ENCODE measurements at regions of chr5 and their contacts with region 1.

Region 1: DNA sequence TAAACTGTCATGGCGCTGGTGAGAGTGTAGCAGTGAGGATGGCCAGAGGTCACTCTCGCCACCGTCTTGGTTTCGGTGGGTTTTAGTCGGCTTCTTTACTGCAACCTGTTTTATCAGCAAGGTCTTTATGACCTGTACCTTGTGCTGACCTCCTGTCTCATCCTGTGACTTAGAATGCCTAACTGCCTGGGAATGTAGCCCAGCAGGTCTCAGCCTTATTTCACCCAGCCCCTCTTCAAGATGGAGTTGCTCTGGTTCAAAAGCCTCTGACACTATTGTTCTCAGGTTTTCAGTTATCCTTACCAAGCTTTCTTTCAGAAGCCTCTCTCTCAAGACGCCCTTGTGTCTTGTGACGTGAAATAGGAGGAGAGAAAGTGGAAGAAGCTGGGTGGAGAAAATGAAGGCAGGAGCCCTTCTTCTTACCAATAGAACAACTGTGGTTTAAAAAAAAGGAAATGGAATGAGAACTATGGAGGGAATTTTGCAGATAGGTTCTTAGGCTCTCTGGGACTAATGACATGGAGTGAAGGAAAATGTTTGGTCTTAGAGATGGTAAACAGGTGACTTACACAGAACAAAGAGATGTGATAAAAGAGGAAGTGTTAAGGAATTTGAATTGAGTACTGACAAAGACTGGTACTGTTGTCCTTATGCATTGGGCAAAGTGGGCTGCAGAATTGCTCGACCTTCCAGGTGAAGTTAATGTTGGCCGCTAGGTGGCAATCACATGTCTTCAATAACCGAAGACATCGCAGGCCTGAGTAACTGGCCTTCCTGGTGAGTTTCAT is 133.3 kb upstream of the RAI14 start:
- DNase-seq: peak; percentile 65
- H3K4me3 Mint-ChIP-seq: no peak overlapping the region
- H3K27ac Mint-ChIP-seq: no peak overlapping the region
- H3K4me1 Mint-ChIP-seq: no peaks in the 10 kb centered on the region
- H3K27me3 Mint-ChIP-seq: no peaks in the 10 kb centered on the region

Region 2: GRCh38 chr5:34533582-34534522 is 11.1 kb after region 1 on chr5:
- CTCF ChIA-PET with region 1: interaction called, 14 read pairs
- DNase-seq: no peak
- H3K4me3 Mint-ChIP-seq: no peak overlapping the region
- H3K27ac Mint-ChIP-seq: no peak overlapping the region
- H3K4me1 Mint-ChIP-seq: no peaks in the 10 kb centered on the region
- H3K27me3 Mint-ChIP-seq: no peaks in the 10 kb centered on the region

Region 3: DNA sequence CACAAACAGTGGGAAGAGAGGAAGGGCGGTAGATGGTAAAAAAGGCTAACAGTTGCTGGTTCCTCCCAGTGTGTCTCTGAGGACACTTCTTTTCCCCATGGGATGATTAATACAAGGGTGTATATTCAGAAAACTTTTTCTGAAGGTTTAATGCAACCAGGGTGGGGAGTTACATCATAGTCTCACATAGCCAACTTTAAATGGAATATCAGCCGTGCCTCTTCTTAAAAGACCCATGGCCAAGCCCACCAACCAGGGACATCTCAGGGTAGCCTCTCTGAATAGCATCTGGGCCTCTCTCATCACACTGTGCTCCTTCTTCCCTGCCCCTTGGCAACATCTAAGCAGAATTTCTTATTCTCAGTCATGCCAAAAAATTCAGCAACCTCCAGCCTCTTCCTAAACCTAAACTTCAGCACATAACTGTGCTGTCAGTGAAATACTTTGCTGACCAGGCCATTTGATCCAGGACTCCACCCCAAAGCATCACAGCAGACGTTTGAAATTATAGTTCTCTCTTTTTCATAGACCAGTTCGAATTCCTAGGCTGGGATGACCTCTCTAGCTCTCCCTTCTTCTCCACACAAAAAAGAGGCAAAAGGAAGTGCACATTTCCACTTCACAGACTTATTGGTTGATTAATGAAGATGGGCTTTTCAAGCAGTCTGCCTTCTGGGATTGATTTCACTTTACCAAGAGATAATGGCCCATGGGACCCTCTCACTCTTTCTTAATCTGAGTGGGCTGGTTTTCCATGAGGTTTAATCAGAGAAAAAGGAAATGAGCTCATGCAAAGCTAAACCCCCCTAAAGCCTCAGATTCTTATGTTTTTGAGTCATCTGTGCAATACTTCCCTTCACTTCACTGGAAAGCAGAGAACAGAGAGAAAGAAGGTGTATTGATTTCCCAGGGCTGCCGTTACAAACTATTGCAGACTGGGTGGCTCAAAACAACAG is 48.2 kb after region 1 on chr5:
- CTCF ChIA-PET with region 1: no interaction called
- DNase-seq: no peak
- H3K4me3 Mint-ChIP-seq: no peak overlapping the region
- H3K27ac Mint-ChIP-seq: no peak overlapping the region
- H3K4me1 Mint-ChIP-seq: no peaks in the 10 kb centered on the region
- H3K27me3 Mint-ChIP-seq: no peaks in the 10 kb centered on the region

Region 4: DNA sequence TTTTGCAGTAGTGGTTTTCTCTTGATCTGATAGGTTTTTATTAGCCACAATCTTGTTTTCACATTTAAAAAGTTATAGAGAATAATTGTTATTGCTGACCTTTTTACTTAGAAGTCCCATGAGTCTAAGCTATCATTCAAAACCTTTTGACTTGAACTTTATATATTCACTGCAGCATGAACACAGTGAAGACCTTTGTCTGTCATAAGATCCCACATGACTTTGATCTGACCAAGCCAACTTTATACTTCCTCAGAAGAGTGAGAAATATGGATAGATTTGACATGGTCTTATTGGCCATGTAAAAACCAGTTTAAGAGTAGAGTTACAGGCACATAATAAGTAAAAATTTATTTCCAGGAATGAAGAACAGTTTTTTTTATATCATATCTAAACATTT is 358.5 kb after region 1 on chr5:
- CTCF ChIA-PET with region 1: no interaction called
- DNase-seq: no peak
- H3K4me3 Mint-ChIP-seq: no peak overlapping the region
- H3K27ac Mint-ChIP-seq: no peak overlapping the region
- H3K4me1 Mint-ChIP-seq: no peaks in the 10 kb centered on the region
- H3K27me3 Mint-ChIP-seq: peaks cover 7% of the 10 kb centered on the region

Region 5: GRCh38 chr5:34898258-34898895 is 375.6 kb after region 1 on chr5:
- CTCF ChIA-PET with region 1: interaction called, 32 read pairs
- DNase-seq: peak; percentile 71
- H3K4me3 Mint-ChIP-seq: no peak overlapping the region
- H3K27ac Mint-ChIP-seq: no peak overlapping the region
- H3K4me1 Mint-ChIP-seq: no peaks in the 10 kb centered on the region
- H3K27me3 Mint-ChIP-seq: no peaks in the 10 kb centered on the region

Region 6: DNA sequence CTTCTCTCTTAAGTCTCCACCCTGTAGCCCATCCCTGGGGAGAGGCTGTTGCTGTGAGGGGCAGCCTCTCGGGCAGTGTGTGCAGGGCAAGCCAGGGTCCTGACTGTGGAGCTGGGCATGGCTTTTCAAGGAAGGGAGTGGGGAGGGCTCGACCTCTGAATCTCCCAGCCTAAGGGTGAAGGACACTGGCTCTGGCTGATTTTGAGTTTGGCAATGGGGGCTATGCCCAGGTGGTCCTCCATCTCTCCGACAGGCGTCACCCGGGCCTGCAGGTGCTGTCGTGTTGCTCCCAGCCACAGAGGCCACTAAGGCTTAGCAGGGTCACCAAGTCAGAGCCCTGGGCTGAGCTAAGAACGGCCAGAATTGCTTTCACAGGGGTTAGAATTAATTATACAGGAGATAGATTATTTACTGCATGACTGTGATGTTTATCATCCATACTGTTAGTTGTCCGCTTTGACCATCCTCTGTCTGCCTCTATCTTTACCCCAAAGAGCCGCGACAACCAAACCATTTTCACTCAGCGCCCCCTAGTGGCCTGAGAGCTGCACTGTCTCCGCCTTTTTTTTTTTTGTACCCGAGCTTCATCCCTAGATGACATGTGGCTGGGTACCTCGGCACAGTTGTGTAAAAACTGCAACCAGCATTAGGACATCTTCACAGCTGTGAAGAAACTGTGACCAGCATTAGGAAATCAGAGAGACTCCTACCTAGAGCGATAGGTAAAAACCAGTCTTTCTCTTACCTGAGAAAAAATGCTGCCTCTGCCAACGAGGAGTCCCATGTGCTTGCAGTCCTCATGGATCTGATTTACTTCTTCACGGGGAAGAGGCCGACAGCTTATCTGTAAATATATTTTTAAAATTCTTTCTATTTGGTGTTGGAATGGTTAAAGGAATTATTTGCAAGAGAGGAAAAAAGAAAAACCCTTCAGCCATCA is 480.5 kb after region 1 on chr5:
- CTCF ChIA-PET with region 1: interaction called, 13 read pairs
- DNase-seq: peak; percentile 66
- H3K4me3 Mint-ChIP-seq: no peak overlapping the region
- H3K27ac Mint-ChIP-seq: no peak overlapping the region
- H3K4me1 Mint-ChIP-seq: no peaks in the 10 kb centered on the region
- H3K27me3 Mint-ChIP-seq: peaks cover 46% of the 10 kb centered on the region

Measured in activated naive CD4-positive, alpha-beta T cell treated with anti-CD3 and anti-CD28 coated beads, Interleukin-2, amount 10 ng/mL, durations not matched to agents 7 days and 5 days (primary cell).